ENCODE measurements at regions of chr2 and their contacts with region 1.

Region 1: GRCh38 chr2:194545978-194546377 is 1111.0 kb upstream of the SLC39A10 start:
- DNase-seq: peak; percentile 47
- ATAC-seq: peak; percentile 34; the same call in 1 of the 2 replicates
- H3K4me3 ChIP-seq: no peak overlapping the region
- H3K27ac ChIP-seq: no peak overlapping the region
- H3K4me1 ChIP-seq: peaks cover 4% of the 10 kb centered on the region; the same call in 1 of the 2 replicates
- H3K27me3 ChIP-seq: no peaks in the 10 kb centered on the region
- CTCF ChIP-seq: peak; percentile 59

Region 2: GRCh38 chr2:194166818-194167217 is 379.2 kb before region 1 on chr2:
- CTCF ChIA-PET with region 1: no interaction called
- POLR2A ChIA-PET with region 1: no interaction called
- intact Hi-C with region 1: loop called (anchors 10 kb)
- DNase-seq: peak; percentile 53
- ATAC-seq: peak; percentile 64
- H3K4me3 ChIP-seq: no peak overlapping the region
- H3K27ac ChIP-seq: no peak overlapping the region
- H3K4me1 ChIP-seq: no peaks in the 10 kb centered on the region
- H3K27me3 ChIP-seq: no peaks in the 10 kb centered on the region
- CTCF ChIP-seq: peak; percentile 59

Region 3: DNA sequence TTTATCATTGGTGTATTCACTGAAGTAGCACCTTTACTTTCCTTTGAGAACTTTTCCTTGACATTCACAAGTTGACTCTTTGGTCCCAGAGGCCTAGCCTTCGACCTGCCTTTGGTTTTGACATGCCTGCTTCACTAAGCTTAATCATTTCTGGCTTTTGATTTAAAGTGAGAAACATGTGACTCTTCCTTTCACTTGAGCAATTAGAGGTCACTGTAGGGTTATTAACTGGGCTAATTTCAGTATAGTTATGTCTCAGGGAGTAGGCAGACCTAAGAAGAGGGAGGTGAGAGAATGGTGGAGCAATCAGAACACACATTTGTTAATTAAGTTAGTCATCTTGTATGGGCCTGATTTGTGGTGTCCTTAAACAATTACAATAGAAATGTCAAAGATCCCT is 70.4 kb after region 1 on chr2:
- CTCF ChIA-PET with region 1: interaction called, 3 read pairs
- POLR2A ChIA-PET with region 1: no interaction called
- intact Hi-C with region 1: loop called (anchors 2 kb)
- DNase-seq: no peak
- ATAC-seq: no peak
- H3K4me3 ChIP-seq: no peak overlapping the region
- H3K27ac ChIP-seq: no peak overlapping the region
- H3K4me1 ChIP-seq: no peaks in the 10 kb centered on the region
- H3K27me3 ChIP-seq: no peaks in the 10 kb centered on the region
- CTCF ChIP-seq: no peak

Region 4: GRCh38 chr2:194698012-194698411 is 152.0 kb after region 1 on chr2:
- CTCF ChIA-PET with region 1: no interaction called
- POLR2A ChIA-PET with region 1: no interaction called
- intact Hi-C with region 1: loop called (anchors 2 kb)
- DNase-seq: peak; percentile 2
- ATAC-seq: peak; percentile 23
- H3K4me3 ChIP-seq: no peak overlapping the region
- H3K27ac ChIP-seq: peak overlapping the region; percentile 69
- H3K4me1 ChIP-seq: peaks cover 37% of the 10 kb centered on the region
- H3K27me3 ChIP-seq: no peaks in the 10 kb centered on the region
- CTCF ChIP-seq: no peak

Region 5: GRCh38 chr2:194730266-194730665 is 184.3 kb after region 1 on chr2:
- CTCF ChIA-PET with region 1: no interaction called
- POLR2A ChIA-PET with region 1: no interaction called
- intact Hi-C with region 1: no loop called
- DNase-seq: peak; percentile 47
- ATAC-seq: peak; percentile 70
- H3K4me3 ChIP-seq: no peak overlapping the region
- H3K27ac ChIP-seq: no peak overlapping the region
- H3K4me1 ChIP-seq: peaks cover 4% of the 10 kb centered on the region; the same call in 1 of the 2 replicates
- H3K27me3 ChIP-seq: no peaks in the 10 kb centered on the region
- CTCF ChIP-seq: no peak

Region 6: DNA sequence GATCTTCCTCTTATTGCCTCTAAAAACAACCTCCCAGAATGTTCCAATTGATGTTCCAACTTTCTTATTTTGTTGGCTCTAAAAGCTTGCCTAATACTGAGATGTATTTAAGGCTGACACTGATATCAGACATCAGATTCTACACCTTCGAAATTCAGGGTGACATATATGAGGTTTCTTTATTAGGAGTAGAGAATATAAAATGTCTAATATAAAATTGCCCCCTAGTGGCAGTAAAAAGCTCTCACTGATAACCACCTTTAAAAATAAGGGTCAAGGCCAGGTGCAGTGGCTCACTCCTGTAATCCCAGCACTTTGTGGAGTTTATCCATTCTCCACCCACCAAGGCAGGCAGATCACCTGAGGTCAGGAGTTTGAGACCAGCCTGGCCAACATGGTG is 321.4 kb after region 1 on chr2:
- CTCF ChIA-PET with region 1: no interaction called
- POLR2A ChIA-PET with region 1: no interaction called
- intact Hi-C with region 1: loop called (anchors 1 kb)
- DNase-seq: peak; percentile 44
- ATAC-seq: peak; percentile 81
- H3K4me3 ChIP-seq: no peak overlapping the region
- H3K27ac ChIP-seq: no peak overlapping the region
- H3K4me1 ChIP-seq: no peaks in the 10 kb centered on the region
- H3K27me3 ChIP-seq: no peaks in the 10 kb centered on the region
- CTCF ChIP-seq: peak; percentile 64

Region 7: DNA sequence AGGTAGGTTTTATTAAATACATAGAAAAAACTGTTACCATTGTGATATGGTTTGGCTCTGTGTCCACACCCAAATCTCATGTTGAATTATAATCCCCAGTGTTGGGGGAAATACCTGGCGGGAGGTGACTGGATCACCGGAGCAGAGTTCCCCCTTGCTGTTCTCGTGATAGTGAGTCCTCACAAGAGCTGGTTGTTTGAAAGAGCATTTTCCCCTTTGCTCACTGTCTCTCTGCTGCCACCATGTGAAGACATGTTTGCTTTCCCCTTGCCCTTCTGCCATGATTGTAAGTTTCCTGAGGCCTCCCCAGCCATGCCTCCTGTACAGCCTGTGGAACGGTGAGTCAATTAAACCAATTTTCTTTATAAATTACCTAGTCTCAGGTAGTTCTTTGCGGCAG is 758.3 kb after region 1 on chr2:
- CTCF ChIA-PET with region 1: no interaction called
- POLR2A ChIA-PET with region 1: no interaction called
- intact Hi-C with region 1: loop called (anchors 5 kb)
- DNase-seq: peak; percentile 45
- ATAC-seq: peak; percentile 57
- H3K4me3 ChIP-seq: no peak overlapping the region
- H3K27ac ChIP-seq: no peak overlapping the region
- H3K4me1 ChIP-seq: no peaks in the 10 kb centered on the region
- H3K27me3 ChIP-seq: no peaks in the 10 kb centered on the region
- CTCF ChIP-seq: peak; percentile 53; the same call in 1 of the 2 replicates

Measured in PC-3 (cell line).